ENCODE measurements at regions of chr1 and their contacts with region 1.

Region 1: DNA sequence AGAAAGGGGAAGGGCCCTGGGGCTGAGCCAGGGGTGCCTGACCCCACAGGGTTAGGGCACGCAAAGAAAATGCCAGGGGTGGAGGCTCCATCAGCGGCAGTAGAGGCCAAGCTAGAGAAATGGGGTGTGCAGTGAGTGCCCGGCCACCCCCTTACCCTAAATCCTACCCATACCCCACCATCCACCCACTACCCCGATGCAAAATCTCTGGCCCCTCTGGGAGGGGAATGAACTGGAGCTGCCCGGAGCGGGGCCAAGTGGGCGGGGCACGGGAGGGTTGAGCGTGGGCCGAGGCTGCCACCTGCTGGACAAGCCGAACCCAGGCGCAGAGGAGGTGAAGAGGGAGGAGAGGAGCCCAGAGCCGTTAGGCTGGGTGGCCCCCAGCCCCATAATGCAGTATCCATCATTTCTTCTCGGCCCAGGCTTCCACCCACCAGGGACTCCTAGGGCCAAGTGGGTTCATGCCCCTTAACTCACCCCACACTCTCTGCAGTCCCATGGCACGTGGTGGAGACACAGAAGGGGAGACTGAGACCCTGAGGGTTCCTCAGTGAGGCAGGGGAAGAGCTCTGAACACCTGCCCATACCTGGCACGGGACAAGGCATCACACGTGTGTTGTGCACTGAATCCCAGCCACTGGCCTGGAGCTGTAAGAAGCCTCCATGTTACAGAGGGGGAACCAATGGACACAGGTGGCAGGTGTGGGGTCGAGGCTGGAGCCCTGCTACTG is 1.4 kb upstream of the C1QC start:
- DNase-seq: peak; percentile 95
- H3K4me3 ChIP-seq: no peak overlapping the region; a peak in 1 of 4 replicates
- H3K27ac ChIP-seq: no peak overlapping the region
- H3K4me1 ChIP-seq: peaks cover 0 to 11% of the 10 kb centered on the region in 2 experiments; a peak in 1 of 4 replicates
- H3K27me3 ChIP-seq: no peaks in the 10 kb centered on the region
- CTCF ChIP-seq: peak; percentile 84
- EP300 ChIP-seq: no peak
- RAD21 ChIP-seq: peak; percentile 94

Region 2: GRCh38 chr1:22440582-22440981 is 201.5 kb before region 1 on chr1:
- CTCF ChIA-PET with region 1: interaction called, 13 read pairs
- POLR2A ChIA-PET with region 1: no interaction called
- DNase-seq: no peak
- H3K4me3 ChIP-seq: no peak overlapping the region
- H3K27ac ChIP-seq: no peak overlapping the region
- H3K4me1 ChIP-seq: no peaks in the 10 kb centered on the region
- H3K27me3 ChIP-seq: no peaks in the 10 kb centered on the region
- CTCF ChIP-seq: no peak
- EP300 ChIP-seq: no peak
- RAD21 ChIP-seq: no peak

Region 3: GRCh38 chr1:22567197-22567596 is 74.9 kb before region 1 on chr1:
- CTCF ChIA-PET with region 1: interaction called, 11 read pairs
- POLR2A ChIA-PET with region 1: no interaction called
- DNase-seq: peak; percentile 58
- H3K4me3 ChIP-seq: no peak overlapping the region
- H3K27ac ChIP-seq: no peak overlapping the region
- H3K4me1 ChIP-seq: peaks cover 0 to 46% of the 10 kb centered on the region in 2 experiments; a peak in 2 of 4 replicates
- H3K27me3 ChIP-seq: peaks cover 45% of the 10 kb centered on the region
- CTCF ChIP-seq: no peak
- EP300 ChIP-seq: no peak
- RAD21 ChIP-seq: no peak

Region 4: GRCh38 chr1:22611530-22611947 is 30.5 kb before region 1 on chr1:
- CTCF ChIA-PET with region 1: interaction called, 12 read pairs
- POLR2A ChIA-PET with region 1: no interaction called
- DNase-seq: no peak
- H3K4me3 ChIP-seq: no peak overlapping the region
- H3K27ac ChIP-seq: no peak overlapping the region
- H3K4me1 ChIP-seq: peaks cover 0 to 4% of the 10 kb centered on the region in 2 experiments; a peak in 1 of 4 replicates
- H3K27me3 ChIP-seq: no peaks in the 10 kb centered on the region; the same call in 1 of the 2 replicates
- CTCF ChIP-seq: no peak
- EP300 ChIP-seq: no peak
- RAD21 ChIP-seq: no peak

Region 5: GRCh38 chr1:22625262-22625925 is 16.7 kb before region 1 on chr1:
- CTCF ChIA-PET with region 1: interaction called, 16 read pairs
- POLR2A ChIA-PET with region 1: no interaction called
- DNase-seq: no peak
- H3K4me3 ChIP-seq: no peak overlapping the region
- H3K27ac ChIP-seq: no peak overlapping the region
- H3K4me1 ChIP-seq: no peaks in the 10 kb centered on the region
- H3K27me3 ChIP-seq: peaks cover 4% of the 10 kb centered on the region; the same call in 1 of the 2 replicates
- CTCF ChIP-seq: no peak
- EP300 ChIP-seq: no peak
- RAD21 ChIP-seq: no peak

Region 6: DNA sequence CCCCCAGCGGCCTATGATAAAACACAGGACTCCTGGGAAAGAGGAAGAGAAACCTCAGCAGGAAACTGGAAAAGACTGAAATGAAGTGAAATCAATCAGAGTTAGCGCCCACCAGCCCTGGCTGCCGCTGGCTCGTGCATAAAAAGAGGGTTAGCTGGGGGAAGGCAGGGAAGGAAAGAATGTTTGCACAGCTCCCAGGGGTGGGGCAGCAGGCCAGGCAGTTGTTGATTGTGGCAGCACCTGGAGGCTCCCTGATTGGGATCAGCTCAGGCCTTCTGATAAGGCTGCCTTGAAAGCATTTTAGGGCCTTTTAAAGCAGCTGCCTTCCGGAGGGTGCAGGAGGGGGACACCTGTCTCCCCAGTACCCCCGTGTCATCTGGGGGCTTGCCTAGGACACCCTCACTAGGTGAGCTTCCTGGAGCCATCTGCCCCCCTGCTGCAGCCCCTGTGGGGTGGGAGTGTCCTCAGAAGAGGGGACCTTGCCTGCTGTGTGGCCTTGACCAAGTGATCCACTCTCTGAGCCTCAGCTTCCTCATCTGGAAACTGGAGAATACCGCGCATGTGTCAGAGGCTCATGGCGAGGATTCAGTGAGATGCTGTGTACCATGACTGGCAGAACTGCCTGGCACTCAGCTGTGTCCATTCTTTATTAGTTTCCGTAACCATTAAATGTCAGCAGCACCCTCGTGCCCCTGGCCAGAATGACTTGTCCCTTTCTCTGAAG is 75.1 kb after region 1 on chr1:
- CTCF ChIA-PET with region 1: no interaction called
- POLR2A ChIA-PET with region 1: no interaction called
- DNase-seq: no peak
- H3K4me3 ChIP-seq: no peak overlapping the region
- H3K27ac ChIP-seq: peak overlapping the region in 1 of 2 experiments; percentile 2; a peak in 1 of 4 replicates
- H3K4me1 ChIP-seq: peaks cover 0 to 25% of the 10 kb centered on the region in 2 experiments; a peak in 1 of 4 replicates
- H3K27me3 ChIP-seq: no peaks in the 10 kb centered on the region
- CTCF ChIP-seq: no peak
- EP300 ChIP-seq: no peak; a peak in 1 of 4 replicates
- RAD21 ChIP-seq: no peak

Region 7: GRCh38 chr1:23282957-23283356 is 640.9 kb after region 1 on chr1:
- CTCF ChIA-PET with region 1: no interaction called
- POLR2A ChIA-PET with region 1: no interaction called
- DNase-seq: no peak
- H3K4me3 ChIP-seq: no peak overlapping the region
- H3K27ac ChIP-seq: peak overlapping the region; percentile 66 to 72
- H3K4me1 ChIP-seq: peaks cover 0 to 12% of the 10 kb centered on the region in 2 experiments; a peak in 3 of 4 replicates
- H3K27me3 ChIP-seq: no peaks in the 10 kb centered on the region
- CTCF ChIP-seq: no peak
- EP300 ChIP-seq: no peak
- RAD21 ChIP-seq: no peak

Measured in SK-N-SH (cell line).